ENCODE measurements at regions of chr6 and their contacts with region 1.

Region 1: DNA sequence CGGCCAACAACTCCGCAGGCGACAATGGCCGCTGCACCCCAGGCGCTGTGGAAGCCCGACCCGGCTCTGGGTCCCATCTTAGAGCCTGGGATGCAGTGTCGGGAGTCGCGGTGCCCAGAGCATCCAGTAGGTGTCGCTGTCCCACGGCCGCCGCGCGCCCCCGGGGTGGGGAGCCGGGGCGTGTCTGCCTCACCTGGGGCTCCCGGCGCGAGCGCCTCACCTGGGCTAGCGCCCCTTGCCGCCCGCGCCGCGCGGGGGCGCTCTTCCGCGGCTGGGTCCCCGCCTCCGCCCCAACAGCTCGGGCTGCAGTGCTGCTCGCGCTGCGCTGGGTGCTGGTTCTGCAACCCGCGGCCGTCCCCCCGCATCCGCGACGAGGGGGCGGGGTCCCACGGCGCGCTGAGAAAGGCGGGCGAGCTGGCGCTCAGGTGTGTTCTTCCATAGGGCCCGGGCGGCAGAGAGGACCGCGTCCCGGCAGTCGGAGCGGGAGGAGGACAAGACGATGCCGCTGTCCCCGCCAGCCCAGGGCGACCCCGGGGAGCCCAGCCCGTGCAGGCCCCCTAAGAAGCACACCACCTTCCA is at the start of gene CRYBG1:
- DNase-seq: peak; percentile 38 to 73
- ATAC-seq: peak; percentile 96 to 97
- H3K4me3 ChIP-seq: peak within 1 kb of the TSS; percentile 68
- H3K27ac ChIP-seq: peak within 1 kb of the TSS; percentile 26 to 60; a peak in 3 of 6 replicates
- H3K4me1 ChIP-seq: peaks cover 7% of the 10 kb centered on the region; the same call in 2 of the 3 replicates
- CTCF ChIP-seq: peak; percentile 83
- EP300 ChIP-seq: no peak
- POLR2A ChIP-seq: no peak
- RAD21 ChIP-seq: peak in 1 of 2 experiments; percentile 55; a peak in 4 of 5 replicates
- polyA plus RNA-seq, gene CRYBG1: 0.30 and 0.31 TPM in 2 replicates

Region 2: DNA sequence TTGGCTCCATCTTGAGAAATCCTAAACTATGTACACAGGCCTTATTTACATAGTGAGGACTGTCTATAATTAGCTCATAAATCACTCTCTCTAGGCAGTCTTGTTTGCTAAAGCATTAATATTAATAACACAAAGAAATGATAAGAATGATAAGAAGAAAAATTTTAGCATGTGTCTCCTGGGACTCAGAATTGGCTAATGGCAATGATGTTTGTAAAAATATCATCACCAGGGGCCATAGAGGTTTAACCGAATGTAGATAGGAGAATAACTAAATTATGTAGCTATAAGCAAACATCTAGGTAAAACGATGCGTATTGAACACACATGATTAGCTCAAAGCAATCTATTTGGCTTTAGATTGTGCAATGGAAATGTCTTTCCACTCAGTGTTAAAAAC is 13.2 kb before region 1 on chr6:
- CTCF ChIA-PET with region 1: interaction called, 10 read pairs
- POLR2A ChIA-PET with region 1: no interaction called
- DNase-seq: no peak
- ATAC-seq: no peak
- H3K4me3 ChIP-seq: no peak overlapping the region
- H3K27ac ChIP-seq: no peak overlapping the region
- H3K4me1 ChIP-seq: no peaks in the 10 kb centered on the region
- CTCF ChIP-seq: no peak
- EP300 ChIP-seq: no peak
- POLR2A ChIP-seq: no peak
- RAD21 ChIP-seq: no peak

Region 3: DNA sequence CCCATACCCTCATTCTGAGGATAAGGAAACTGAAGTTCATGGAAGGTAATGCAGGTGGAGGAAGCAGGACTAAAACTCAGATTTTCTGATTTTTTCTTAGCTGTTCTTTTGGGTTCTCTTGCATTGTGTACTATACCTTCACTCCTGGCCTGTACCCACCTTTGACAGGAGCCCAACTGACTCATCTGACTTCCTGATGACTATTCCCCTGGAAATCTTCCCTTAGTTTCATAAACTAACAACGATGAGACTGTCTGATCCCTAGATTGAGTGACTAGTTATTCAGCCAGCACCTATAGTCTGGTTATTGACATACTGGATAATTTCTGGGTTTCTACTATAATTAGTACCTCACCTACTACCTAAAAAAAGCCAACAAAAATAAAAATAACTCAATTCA is 10.1 kb after region 1 on chr6:
- CTCF ChIA-PET with region 1: interaction called, 15 read pairs
- POLR2A ChIA-PET with region 1: no interaction called
- DNase-seq: no peak
- ATAC-seq: no peak
- H3K4me3 ChIP-seq: no peak overlapping the region
- H3K27ac ChIP-seq: no peak overlapping the region
- H3K4me1 ChIP-seq: no peaks in the 10 kb centered on the region
- CTCF ChIP-seq: no peak
- EP300 ChIP-seq: no peak
- POLR2A ChIP-seq: no peak
- RAD21 ChIP-seq: no peak

Region 4: GRCh38 chr6:106658469-106658868 is 298.0 kb after region 1 on chr6:
- CTCF ChIA-PET with region 1: no interaction called
- POLR2A ChIA-PET with region 1: no interaction called
- DNase-seq: peak in 1 of 2 experiments; percentile 10
- ATAC-seq: no peak
- H3K4me3 ChIP-seq: no peak overlapping the region
- H3K27ac ChIP-seq: no peak overlapping the region
- H3K4me1 ChIP-seq: no peaks in the 10 kb centered on the region
- CTCF ChIP-seq: no peak
- EP300 ChIP-seq: no peak
- POLR2A ChIP-seq: no peak
- RAD21 ChIP-seq: no peak